HepG2 (cell line): ENCODE measurements at regions of chr2 and their contacts with region 1.

Region 1: GRCh38 chr2:226799181-226799975 is at the start of gene IRS1:
- DNase-seq: peak; percentile 66
- ATAC-seq: peak; percentile 65
- H3K4me3 ChIP-seq: peak within 1 kb of the TSS; percentile 59 to 72 (median 62)
- H3K27ac ChIP-seq: peak within 1 kb of the TSS; percentile 96
- H3K4me1 ChIP-seq: peaks cover 79% of the 10 kb centered on the region
- H3K27me3 ChIP-seq: no peaks in the 10 kb centered on the region
- CTCF ChIP-seq: no peak
- EP300 ChIP-seq: peak in 1 of 2 experiments; percentile 50; a peak in 2 of 4 replicates
- POLR2A ChIP-seq: no peak
- RAD21 ChIP-seq: peak; percentile 93
- total RNA-seq, gene IRS1: 7.9 and 8.7 TPM in 2 replicates

Region 2: DNA sequence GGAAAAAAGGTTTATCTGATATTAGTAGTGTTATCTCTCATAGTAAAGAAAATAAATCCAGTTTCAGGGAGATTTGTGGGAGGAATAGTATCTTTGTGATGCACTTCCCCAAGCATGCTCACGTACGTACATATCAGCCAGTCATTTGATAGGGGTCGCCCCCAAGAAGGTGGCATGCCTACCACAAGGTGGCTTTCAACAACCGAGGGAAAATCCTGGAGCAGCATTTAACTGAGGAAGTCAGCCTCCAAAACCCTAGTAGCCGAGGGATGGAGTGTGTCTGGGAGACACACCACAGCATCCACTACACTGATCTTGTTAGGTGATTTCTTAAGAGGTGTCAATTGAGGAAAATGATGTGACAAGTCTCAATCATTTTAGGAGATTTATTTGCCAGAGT is 776.0 kb before region 1 on chr2:
- CTCF ChIA-PET with region 1: interaction called, 3 read pairs
- POLR2A ChIA-PET with region 1: no interaction called
- in situ Hi-C with region 1: no loop called
- intact Hi-C with region 1: loop called (anchors 1 kb)
- DNase-seq: peak; percentile 51
- ATAC-seq: peak; percentile 88
- H3K4me3 ChIP-seq: no peak overlapping the region
- H3K27ac ChIP-seq: no peak overlapping the region
- H3K4me1 ChIP-seq: peaks cover 8% of the 10 kb centered on the region
- H3K27me3 ChIP-seq: no peaks in the 10 kb centered on the region
- CTCF ChIP-seq: peak; percentile 66
- EP300 ChIP-seq: no peak
- POLR2A ChIP-seq: no peak
- RAD21 ChIP-seq: peak; percentile 54

Region 3: GRCh38 chr2:226215902-226216503 is 583.4 kb before region 1 on chr2:
- CTCF ChIA-PET with region 1: no interaction called
- POLR2A ChIA-PET with region 1: interaction called, 6 read pairs
- in situ Hi-C with region 1: loop called (anchors 10 kb)
- intact Hi-C with region 1: loop called (anchors 2 kb)
- DNase-seq: peak; percentile 63
- ATAC-seq: peak; percentile 99
- H3K4me3 ChIP-seq: no peak overlapping the region
- H3K27ac ChIP-seq: no peak overlapping the region
- H3K4me1 ChIP-seq: 0 out of 2 replicates have a peak, but pooled peaks cover 5% of the 10 kb centered on the region
- H3K27me3 ChIP-seq: no peaks in the 10 kb centered on the region
- CTCF ChIP-seq: peak; percentile 89
- EP300 ChIP-seq: peak in 1 of 2 experiments; percentile 45; a peak in 1 of 4 replicates
- POLR2A ChIP-seq: no peak
- RAD21 ChIP-seq: peak; percentile 78

Region 4: DNA sequence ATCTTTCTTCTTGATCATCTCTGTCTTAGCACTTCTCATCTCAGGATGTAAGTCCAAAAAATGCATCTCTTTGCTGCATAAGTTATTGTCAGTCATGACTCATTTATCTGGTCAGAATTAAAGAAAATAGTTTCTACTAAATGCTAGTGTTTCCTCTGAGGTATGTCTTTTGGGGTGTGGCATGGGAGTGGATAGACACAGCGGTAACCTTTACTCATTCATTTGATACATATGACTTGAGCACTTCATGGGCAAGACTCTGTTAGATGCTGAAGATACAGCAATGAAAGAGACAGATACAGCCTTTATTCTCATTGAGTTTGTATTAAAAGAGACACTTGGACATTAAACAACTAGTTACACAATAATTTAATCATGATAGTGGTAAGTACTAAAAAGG is 284.4 kb before region 1 on chr2:
- CTCF ChIA-PET with region 1: interaction called, 3 read pairs
- POLR2A ChIA-PET with region 1: no interaction called
- in situ Hi-C with region 1: no loop called
- intact Hi-C with region 1: loop called (anchors 1 kb)
- DNase-seq: no peak
- ATAC-seq: peak; percentile 38
- H3K4me3 ChIP-seq: no peak overlapping the region
- H3K27ac ChIP-seq: peak overlapping the region; percentile 89
- H3K4me1 ChIP-seq: peaks cover 35% of the 10 kb centered on the region
- H3K27me3 ChIP-seq: no peaks in the 10 kb centered on the region
- CTCF ChIP-seq: no peak
- EP300 ChIP-seq: no peak
- POLR2A ChIP-seq: no peak
- RAD21 ChIP-seq: 0 out of 2 replicates have a peak, but pooled peaks have one; percentile 10

Region 5: DNA sequence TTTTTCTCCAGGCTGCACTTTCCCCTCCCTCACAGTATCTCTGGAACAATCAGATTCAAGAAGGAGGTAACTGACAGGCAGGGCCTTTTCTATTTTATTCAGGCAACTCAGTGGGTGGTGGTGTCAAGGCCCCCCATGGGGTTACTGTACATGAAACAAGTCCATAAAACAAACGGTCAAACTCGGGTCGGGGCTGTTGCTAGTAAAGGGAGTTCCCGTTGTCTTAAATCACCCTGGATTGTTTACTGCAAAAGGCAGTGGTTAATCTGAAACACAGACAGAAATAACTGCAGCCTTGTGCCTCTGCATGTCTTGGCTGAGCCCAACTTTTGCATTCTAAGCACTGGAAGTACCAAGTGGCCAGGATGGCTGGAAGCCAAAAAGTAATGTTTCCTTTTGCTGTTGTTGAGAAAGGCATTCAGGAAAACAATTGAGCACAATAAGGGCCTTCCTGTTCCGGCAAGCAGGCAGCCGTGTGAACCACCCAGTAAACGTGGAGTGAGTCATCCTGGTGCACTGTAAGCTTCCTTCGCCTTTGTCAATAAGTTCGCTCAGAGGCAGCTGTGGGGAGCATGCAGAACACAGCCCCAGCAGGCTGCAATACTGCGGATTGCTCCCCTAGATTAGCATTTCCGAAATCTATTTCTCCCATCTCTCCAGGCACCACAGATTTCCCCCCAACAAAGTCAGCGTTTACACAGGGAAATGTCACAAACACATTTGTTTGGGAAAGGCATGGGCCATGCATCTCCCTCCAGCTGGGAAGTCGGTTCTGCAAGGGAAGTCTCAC is 149.3 kb before region 1 on chr2:
- CTCF ChIA-PET with region 1: no interaction called
- POLR2A ChIA-PET with region 1: interaction called, 6 read pairs
- in situ Hi-C with region 1: no loop called
- intact Hi-C with region 1: loop called (anchors 1 kb)
- DNase-seq: peak; percentile 90
- ATAC-seq: peak; percentile 99
- H3K4me3 ChIP-seq: no peak overlapping the region
- H3K27ac ChIP-seq: peak overlapping the region; percentile 59
- H3K4me1 ChIP-seq: peaks cover 56% of the 10 kb centered on the region
- H3K27me3 ChIP-seq: no peaks in the 10 kb centered on the region
- CTCF ChIP-seq: no peak
- EP300 ChIP-seq: peak in 1 of 2 experiments; percentile 84; a peak in 1 of 4 replicates
- POLR2A ChIP-seq: peak in 1 of 2 experiments; percentile 25; a peak in 1 of 4 replicates
- RAD21 ChIP-seq: no peak; the same call in 1 of the 2 replicates

Region 6: DNA sequence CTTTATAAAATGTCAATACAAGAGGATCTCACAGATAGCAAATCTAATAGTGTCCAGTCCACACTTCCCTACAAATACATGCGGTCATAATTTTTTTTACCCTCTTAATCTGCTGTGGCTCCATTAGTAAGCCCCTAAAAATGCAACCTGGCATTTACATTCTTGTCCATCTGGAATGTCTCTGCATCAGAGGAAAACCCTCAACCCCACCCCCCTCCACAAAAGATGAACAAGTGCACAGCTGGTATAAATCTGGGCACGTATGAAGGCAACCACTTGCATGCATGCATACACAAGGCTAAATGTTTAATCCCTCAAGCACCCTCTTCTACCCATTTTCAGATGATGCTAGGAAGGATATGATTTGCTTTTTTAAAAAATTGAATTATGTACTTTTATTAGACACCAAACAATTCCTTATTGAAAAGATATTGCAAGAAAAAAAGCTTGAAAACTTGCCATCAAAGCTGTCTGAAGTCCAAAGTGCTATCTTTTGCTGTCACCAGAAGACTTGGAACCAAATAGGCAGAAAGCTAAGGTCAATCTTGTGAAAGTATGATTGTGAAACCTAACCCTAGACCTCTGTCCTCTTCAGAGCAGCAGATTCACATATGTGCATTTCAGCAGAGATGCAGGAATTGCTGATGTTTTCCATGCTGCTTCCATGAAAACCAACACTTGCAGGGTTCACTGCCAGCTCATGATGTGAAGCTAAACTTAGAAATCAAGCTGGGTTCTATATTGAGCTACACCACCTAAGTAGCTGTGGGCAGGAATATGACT is 38.8 kb before region 1 on chr2:
- CTCF ChIA-PET with region 1: no interaction called
- POLR2A ChIA-PET with region 1: interaction called, 18 read pairs
- in situ Hi-C with region 1: no loop called
- intact Hi-C with region 1: loop called (anchors 2 kb)
- DNase-seq: peak; percentile 90
- ATAC-seq: peak; percentile 99
- H3K4me3 ChIP-seq: peak overlapping the region in 1 of 3 experiments; percentile 5; a peak in 1 of 6 replicates
- H3K27ac ChIP-seq: peak overlapping the region; percentile 52
- H3K4me1 ChIP-seq: peaks cover 45% of the 10 kb centered on the region
- H3K27me3 ChIP-seq: no peaks in the 10 kb centered on the region
- CTCF ChIP-seq: 0 out of 2 replicates have a peak, but pooled peaks have one; percentile 6
- EP300 ChIP-seq: peak; percentile 95 to 97; a peak in 3 of 4 replicates
- POLR2A ChIP-seq: no peak
- RAD21 ChIP-seq: no peak; the same call in 1 of the 2 replicates